Left cardiac atrium (tissue), 4 donors: ENCODE measurements at regions of chr17 and their contacts with region 1.

Region 1: GRCh38 chr17:38735161-38735997 is 5.2 kb downstream of the CISD3 start:
- DNase-seq: peak; percentile 67
- ATAC-seq: peak; percentile 8 to 16

Region 2: GRCh38 chr17:38584350-38584925 is 150.9 kb before region 1 on chr17:
- intact Hi-C with region 1: no loop called
- DNase-seq: peak; percentile 61
- ATAC-seq: peak; percentile 87 to 89

Region 3: GRCh38 chr17:38674749-38675615 is 60.4 kb before region 1 on chr17 and contains the start of gene EPOP:
- intact Hi-C with region 1: loop called (anchors 2 to 5 kb)
- DNase-seq: peak; percentile 91
- ATAC-seq: peak; percentile 92 to 93
- total RNA-seq, gene EPOP: 1.4 to 3.9 TPM